ENCODE measurements at regions of chr15 and their contacts with region 1.

Region 1: GRCh38 chr15:38991126-38991525 is 426.5 kb upstream of the RASGRP1 start:
- DNase-seq: peak; percentile 8
- ATAC-seq: no peak
- H3K4me3 ChIP-seq: no peak overlapping the region
- H3K27ac ChIP-seq: no peak overlapping the region
- H3K4me1 ChIP-seq: no peaks in the 10 kb centered on the region
- H3K27me3 ChIP-seq: no peaks in the 10 kb centered on the region
- CTCF ChIP-seq: peak in 2 of 3 experiments; percentile 35 to 56; a peak in 4 of 6 replicates
- POLR2A ChIP-seq: no peak
- RAD21 ChIP-seq: peak; percentile 33

Region 2: GRCh38 chr15:38817427-38818156 is 173.5 kb before region 1 on chr15:
- CTCF ChIA-PET with region 1: no interaction called
- POLR2A ChIA-PET with region 1: no interaction called
- RAD21 ChIA-PET with region 1: no interaction called
- intact Hi-C with region 1: loop called (anchors 1 kb)
- DNase-seq: peak; percentile 65
- ATAC-seq: peak; percentile 100
- H3K4me3 ChIP-seq: no peak overlapping the region
- H3K27ac ChIP-seq: no peak overlapping the region
- H3K4me1 ChIP-seq: no peaks in the 10 kb centered on the region; a peak in 1 of 4 replicates
- H3K27me3 ChIP-seq: no peaks in the 10 kb centered on the region; the same call in 1 of the 2 replicates
- CTCF ChIP-seq: peak; percentile 98 to 100 (median 100)
- POLR2A ChIP-seq: no peak
- RAD21 ChIP-seq: peak; percentile 83

Region 3: DNA sequence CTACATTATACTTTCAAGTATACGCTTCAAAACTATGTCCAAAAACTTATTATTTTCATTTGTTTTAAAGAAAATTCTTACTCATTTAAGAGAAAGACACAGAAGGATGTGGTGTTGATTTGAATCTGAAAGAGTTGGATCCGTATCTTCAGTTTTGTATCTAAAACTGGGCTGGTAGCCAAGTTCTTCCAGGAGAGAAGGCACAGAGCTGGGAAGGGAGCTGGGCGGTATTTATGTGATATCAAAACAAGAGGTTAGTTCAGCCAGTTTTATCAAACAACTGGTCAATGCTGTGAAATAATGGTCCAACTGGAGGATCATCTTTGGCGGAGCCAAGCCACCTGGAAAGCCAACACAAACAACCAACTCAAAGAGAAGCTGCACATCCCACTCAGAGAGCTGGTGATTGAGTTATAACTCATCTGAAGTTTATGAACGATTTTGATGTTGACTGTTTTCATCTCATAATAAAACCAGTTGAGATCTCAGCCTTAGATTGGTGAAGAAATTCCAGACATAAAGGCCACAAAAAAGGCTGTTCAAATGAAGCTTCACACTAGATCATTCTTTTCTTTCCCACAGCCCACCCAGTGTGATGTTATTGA is 63.1 kb after region 1 on chr15:
- CTCF ChIA-PET with region 1: no interaction called
- POLR2A ChIA-PET with region 1: no interaction called
- RAD21 ChIA-PET with region 1: no interaction called
- intact Hi-C with region 1: no loop called
- DNase-seq: no peak
- ATAC-seq: no peak
- H3K4me3 ChIP-seq: no peak overlapping the region
- H3K27ac ChIP-seq: no peak overlapping the region
- H3K4me1 ChIP-seq: no peaks in the 10 kb centered on the region
- H3K27me3 ChIP-seq: no peaks in the 10 kb centered on the region
- CTCF ChIP-seq: no peak
- POLR2A ChIP-seq: no peak
- RAD21 ChIP-seq: no peak

Measured in HCT116 (cell line).